Endothelial cell of umbilical vein (primary cell): ENCODE measurements at regions of chr22 and their contacts with region 1.

Region 1: GRCh38 chr22:42754658-42755057 is 34.0 kb upstream of the A4GALT start:
- DNase-seq: no peak
- H3K4me3 ChIP-seq: no peak overlapping the region
- H3K27ac ChIP-seq: no peak overlapping the region
- H3K4me1 ChIP-seq: peaks cover 4% of the 10 kb centered on the region
- H3K27me3 ChIP-seq: no peaks in the 10 kb centered on the region
- CTCF ChIP-seq: no peak
- POLR2A ChIP-seq: no peak

Region 2: DNA sequence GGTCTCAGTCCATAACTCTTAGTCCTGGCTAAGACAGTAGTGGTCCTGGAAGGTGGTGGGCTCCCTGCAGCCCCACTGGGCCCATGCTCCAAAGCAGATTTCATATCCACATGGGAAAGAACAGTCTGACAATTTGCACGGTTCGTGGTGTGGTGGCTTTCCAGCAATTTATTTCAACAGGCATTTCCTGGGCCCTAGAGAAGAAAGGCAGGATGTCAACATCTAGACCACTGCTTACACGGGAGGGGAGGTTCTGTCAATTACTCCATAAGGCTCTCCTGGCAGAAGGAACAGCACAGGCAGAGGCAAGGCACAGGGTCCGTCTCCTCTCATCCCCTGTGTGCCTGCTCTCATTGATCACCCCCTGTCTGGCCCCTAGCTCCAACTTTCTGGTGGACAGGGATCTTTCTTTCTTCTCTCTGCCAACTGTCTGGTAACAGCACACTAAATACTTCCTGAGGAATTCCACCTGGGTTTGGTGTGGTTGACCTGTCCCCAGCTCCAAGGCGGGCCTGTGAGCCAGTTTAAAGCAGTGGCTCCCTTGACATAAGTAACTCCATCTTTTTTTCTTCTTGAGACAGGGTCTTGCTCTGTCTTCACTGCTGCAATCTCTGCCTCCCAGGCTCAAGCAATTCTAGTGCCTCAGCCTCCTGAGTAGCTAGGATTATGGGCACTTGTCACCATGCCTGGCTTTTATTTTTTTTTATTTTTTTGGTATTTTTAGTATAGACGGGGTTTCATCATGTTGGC is 28.9 kb before region 1 on chr22:
- CTCF ChIA-PET with region 1: interaction called, 4 read pairs
- POLR2A ChIA-PET with region 1: no interaction called
- dilution Hi-C with region 1: no loop called
- intact Hi-C with region 1: loop called (anchors 1 kb)
- DNase-seq: no peak
- H3K4me3 ChIP-seq: no peak overlapping the region
- H3K27ac ChIP-seq: no peak overlapping the region
- H3K4me1 ChIP-seq: peaks cover 15% of the 10 kb centered on the region
- H3K27me3 ChIP-seq: peaks cover 0 to 4% of the 10 kb centered on the region in 2 experiments
- CTCF ChIP-seq: no peak
- POLR2A ChIP-seq: no peak